ENCODE measurements at regions of chr22 and their contacts with region 1.

Region 1: GRCh38 chr22:36239401-36240171 is at the start of gene APOL2:
- DNase-seq: peak; percentile 92
- H3K4me3 Mint-ChIP-seq: peak within 1 kb of the TSS; percentile 97
- H3K27ac Mint-ChIP-seq: peak within 1 kb of the TSS; percentile 95
- H3K4me1 Mint-ChIP-seq: peaks cover 66% of the 10 kb centered on the region
- H3K27me3 Mint-ChIP-seq: no peaks in the 10 kb centered on the region
- CTCF ChIP-seq: peak; percentile 67
- total RNA-seq, gene APOL2: 90.1 and 154 TPM in 2 replicates

Region 2: GRCh38 chr22:36528795-36529751 is 289.5 kb after region 1 on chr22 and contains the start of gene EIF3D:
- CTCF ChIA-PET with region 1: no interaction called
- intact Hi-C with region 1: loop called (anchors 5 kb)
- DNase-seq: peak; percentile 97
- H3K4me3 Mint-ChIP-seq: peak within 1 kb of the TSS; percentile 88
- H3K27ac Mint-ChIP-seq: peak within 1 kb of the TSS; percentile 99
- H3K4me1 Mint-ChIP-seq: peaks cover 10% of the 10 kb centered on the region
- H3K27me3 Mint-ChIP-seq: peaks cover 12% of the 10 kb centered on the region
- CTCF ChIP-seq: no peak
- total RNA-seq, gene EIF3D: 214 and 224 TPM in 2 replicates